ENCODE measurements at regions of chr2 and their contacts with region 1.

Region 1: GRCh38 chr2:122300758-122301157 is 545.3 kb downstream of the TSN start:
- DNase-seq: no peak
- ATAC-seq: no peak
- H3K4me3 Mint-ChIP-seq: no peak overlapping the region
- H3K27ac Mint-ChIP-seq: no peak overlapping the region
- H3K4me1 Mint-ChIP-seq: no peaks in the 10 kb centered on the region
- H3K27me3 Mint-ChIP-seq: peaks cover 3% of the 10 kb centered on the region

Region 2: DNA sequence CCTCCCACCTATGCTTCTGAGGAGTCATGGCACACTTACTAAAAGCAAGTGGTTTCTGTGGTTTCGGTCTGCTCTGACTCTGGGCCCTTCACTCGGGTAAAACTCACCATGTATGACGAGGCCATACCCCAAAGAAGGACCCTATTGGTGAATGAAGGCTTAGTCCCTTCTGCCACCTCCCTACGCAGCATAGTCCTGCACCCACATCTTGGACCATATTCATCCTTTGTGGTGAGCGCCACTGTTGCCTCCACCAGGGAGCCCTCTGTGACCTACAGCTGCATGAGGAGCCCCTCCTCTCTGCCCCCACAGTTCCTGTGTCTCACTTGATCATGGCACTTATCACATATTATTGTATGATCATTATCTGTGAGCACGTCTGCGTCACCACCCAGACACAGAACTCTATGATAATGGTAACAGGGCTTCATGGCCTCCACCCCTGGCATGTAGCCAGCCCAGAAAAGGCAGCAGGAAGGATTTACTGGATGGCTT is 1129.1 kb before region 1 on chr2:
- CTCF ChIA-PET with region 1: no interaction called
- POLR2A ChIA-PET with region 1: no interaction called
- intact Hi-C with region 1: no loop called
- DNase-seq: peak; percentile 32
- ATAC-seq: peak; percentile 89
- H3K4me3 Mint-ChIP-seq: no peak overlapping the region
- H3K27ac Mint-ChIP-seq: no peak overlapping the region
- H3K4me1 Mint-ChIP-seq: no peaks in the 10 kb centered on the region
- H3K27me3 Mint-ChIP-seq: peaks cover 11% of the 10 kb centered on the region

Region 3: GRCh38 chr2:121974897-121975661 is 325.7 kb before region 1 on chr2:
- CTCF ChIA-PET with region 1: no interaction called
- POLR2A ChIA-PET with region 1: no interaction called
- intact Hi-C with region 1: loop called in 1 of 2 experiments (anchors 5 kb)
- DNase-seq: peak; percentile 58
- ATAC-seq: peak; percentile 96
- H3K4me3 Mint-ChIP-seq: peak overlapping the region; percentile 36
- H3K27ac Mint-ChIP-seq: no peak overlapping the region
- H3K4me1 Mint-ChIP-seq: peaks cover 9% of the 10 kb centered on the region
- H3K27me3 Mint-ChIP-seq: peaks cover 4% of the 10 kb centered on the region